ENCODE measurements at regions of chr1 and their contacts with region 1.

Region 1: DNA sequence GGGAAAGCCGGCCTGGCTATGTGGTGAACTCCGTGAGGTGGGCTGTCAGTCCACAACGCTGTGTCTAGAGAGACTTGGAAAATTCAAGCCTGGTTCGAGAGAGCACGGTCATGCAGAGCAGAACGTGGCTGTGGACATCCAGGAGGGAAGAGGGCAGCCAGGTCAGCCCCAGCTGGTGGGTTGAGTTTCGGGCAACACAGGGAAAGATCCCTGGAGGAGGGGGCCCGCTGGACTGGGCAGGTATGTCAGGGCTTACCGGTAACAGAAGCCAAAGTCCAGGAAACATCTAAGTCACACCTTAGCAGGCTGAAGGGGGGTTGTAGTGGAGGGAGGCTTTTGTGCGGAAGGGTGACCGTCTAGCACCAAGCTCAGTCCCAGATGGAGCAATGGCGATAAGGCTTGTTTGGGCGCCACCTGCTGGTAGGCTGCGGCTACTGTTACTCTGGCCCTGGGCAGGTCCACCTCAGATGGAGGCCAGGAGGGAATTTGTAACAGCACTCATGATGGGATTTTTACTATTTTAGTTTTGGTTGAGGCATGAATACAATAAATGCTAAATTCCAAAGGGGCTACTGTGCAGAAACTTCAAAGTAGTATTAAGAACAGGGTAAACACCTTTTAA is 143.3 kb upstream of the ZNF644 start:
- DNase-seq: peak; percentile 36
- H3K4me3 ChIP-seq: no peak overlapping the region
- H3K27ac ChIP-seq: no peak overlapping the region
- H3K4me1 ChIP-seq: no peaks in the 10 kb centered on the region
- H3K27me3 ChIP-seq: no peaks in the 10 kb centered on the region
- CTCF ChIP-seq: peak; percentile 98 to 99

Region 2: DNA sequence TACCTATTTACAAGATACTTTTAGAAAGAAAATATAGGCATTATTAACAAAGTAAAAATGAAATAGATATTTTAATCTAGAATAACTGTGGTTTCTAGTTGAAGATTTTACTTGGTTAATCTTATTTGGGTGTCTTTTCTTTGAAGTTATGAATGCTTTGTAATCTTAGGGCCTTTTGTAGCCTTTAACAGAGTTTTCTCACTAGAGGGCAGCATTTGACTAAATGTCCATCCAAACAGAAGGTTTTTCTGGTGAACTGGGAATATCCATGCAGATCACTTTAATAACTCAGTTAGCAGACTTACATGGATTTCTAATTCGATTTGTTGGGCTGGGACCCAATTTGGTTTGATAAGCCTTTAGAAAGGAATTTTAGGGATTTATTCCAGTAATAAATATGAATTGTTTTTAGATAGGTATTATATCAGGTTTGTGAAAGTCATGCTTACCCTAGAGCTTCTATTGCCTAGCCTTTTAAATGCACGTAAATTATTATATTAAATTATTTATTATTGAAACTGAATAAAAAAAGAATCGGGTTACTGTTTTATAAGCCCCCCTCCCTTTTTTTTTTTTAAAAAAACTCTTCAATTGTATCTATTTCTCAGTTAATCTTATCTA is 1050.5 kb before region 1 on chr1:
- CTCF ChIA-PET with region 1: no interaction called
- dilution Hi-C with region 1: no loop called
- in situ Hi-C with region 1: loop called (anchors 25 kb)
- intact Hi-C with region 1: loop called (anchors 1 kb)
- DNase-seq: peak; percentile 41
- H3K4me3 ChIP-seq: no peak overlapping the region
- H3K27ac ChIP-seq: no peak overlapping the region
- H3K4me1 ChIP-seq: no peaks in the 10 kb centered on the region
- H3K27me3 ChIP-seq: no peaks in the 10 kb centered on the region
- CTCF ChIP-seq: peak; percentile 59 to 74

Region 3: DNA sequence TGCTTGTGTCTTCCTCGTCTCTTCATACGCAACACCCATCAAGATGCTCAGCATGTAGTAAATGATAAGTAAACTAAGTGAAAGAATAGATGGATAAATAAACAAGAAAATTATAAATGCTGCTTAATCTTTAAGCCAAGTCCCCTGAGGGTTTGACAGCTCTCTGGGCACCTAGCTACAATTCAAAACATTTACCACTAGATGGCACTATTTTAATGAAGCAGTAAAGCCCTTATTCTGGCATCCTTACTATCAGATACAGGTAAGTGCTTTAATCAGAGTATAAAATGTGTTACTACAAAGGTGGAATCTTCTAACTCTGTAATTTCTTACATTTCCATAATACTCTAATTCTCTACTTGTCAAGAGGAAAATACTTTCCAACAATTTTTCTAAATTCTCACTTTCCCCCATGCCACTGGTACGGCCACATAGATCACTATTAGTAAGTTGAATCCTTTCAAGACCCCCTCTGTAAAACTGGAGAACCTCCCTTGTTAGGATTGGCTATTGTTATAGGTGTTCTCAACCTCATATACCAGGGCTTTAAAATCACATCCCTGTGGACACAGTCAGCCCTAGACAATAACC is 585.8 kb before region 1 on chr1:
- CTCF ChIA-PET with region 1: no interaction called
- dilution Hi-C with region 1: no loop called
- in situ Hi-C with region 1: no loop called
- intact Hi-C with region 1: loop called (anchors 1 kb)
- DNase-seq: peak; percentile 21
- H3K4me3 ChIP-seq: no peak overlapping the region
- H3K27ac ChIP-seq: no peak overlapping the region
- H3K4me1 ChIP-seq: peaks cover 11% of the 10 kb centered on the region
- H3K27me3 ChIP-seq: peaks cover 2% of the 10 kb centered on the region
- CTCF ChIP-seq: peak; percentile 61

Region 4: GRCh38 chr1:90721210-90722194 is 443.6 kb before region 1 on chr1:
- CTCF ChIA-PET with region 1: interaction called, 14 read pairs
- dilution Hi-C with region 1: no loop called
- in situ Hi-C with region 1: no loop called
- intact Hi-C with region 1: loop called (anchors 1 kb)
- DNase-seq: peak; percentile 41
- H3K4me3 ChIP-seq: no peak overlapping the region
- H3K27ac ChIP-seq: no peak overlapping the region
- H3K4me1 ChIP-seq: peaks cover 7% of the 10 kb centered on the region
- H3K27me3 ChIP-seq: peaks cover 74% of the 10 kb centered on the region
- CTCF ChIP-seq: peak; percentile 89 to 92

Region 5: GRCh38 chr1:91104712-91105111 is 60.4 kb before region 1 on chr1:
- CTCF ChIA-PET with region 1: no interaction called
- dilution Hi-C with region 1: no loop called
- in situ Hi-C with region 1: no loop called
- intact Hi-C with region 1: no loop called
- DNase-seq: no peak
- H3K4me3 ChIP-seq: no peak overlapping the region
- H3K27ac ChIP-seq: no peak overlapping the region
- H3K4me1 ChIP-seq: no peaks in the 10 kb centered on the region
- H3K27me3 ChIP-seq: no peaks in the 10 kb centered on the region
- CTCF ChIP-seq: no peak

Region 6: GRCh38 chr1:91234181-91234580 is 69.0 kb after region 1 on chr1:
- CTCF ChIA-PET with region 1: no interaction called
- dilution Hi-C with region 1: no loop called
- in situ Hi-C with region 1: no loop called
- intact Hi-C with region 1: no loop called
- DNase-seq: no peak
- H3K4me3 ChIP-seq: no peak overlapping the region
- H3K27ac ChIP-seq: no peak overlapping the region
- H3K4me1 ChIP-seq: no peaks in the 10 kb centered on the region
- H3K27me3 ChIP-seq: no peaks in the 10 kb centered on the region
- CTCF ChIP-seq: no peak

Region 7: GRCh38 chr1:91282695-91283420 is 117.7 kb after region 1 on chr1:
- CTCF ChIA-PET with region 1: interaction called, 5 read pairs
- dilution Hi-C with region 1: no loop called
- in situ Hi-C with region 1: loop called in 1 of 2 experiments (anchors 10 kb)
- intact Hi-C with region 1: loop called (anchors 1 kb)
- DNase-seq: peak; percentile 34
- H3K4me3 ChIP-seq: no peak overlapping the region
- H3K27ac ChIP-seq: no peak overlapping the region
- H3K4me1 ChIP-seq: no peaks in the 10 kb centered on the region
- H3K27me3 ChIP-seq: no peaks in the 10 kb centered on the region
- CTCF ChIP-seq: peak; percentile 78

Region 8: DNA sequence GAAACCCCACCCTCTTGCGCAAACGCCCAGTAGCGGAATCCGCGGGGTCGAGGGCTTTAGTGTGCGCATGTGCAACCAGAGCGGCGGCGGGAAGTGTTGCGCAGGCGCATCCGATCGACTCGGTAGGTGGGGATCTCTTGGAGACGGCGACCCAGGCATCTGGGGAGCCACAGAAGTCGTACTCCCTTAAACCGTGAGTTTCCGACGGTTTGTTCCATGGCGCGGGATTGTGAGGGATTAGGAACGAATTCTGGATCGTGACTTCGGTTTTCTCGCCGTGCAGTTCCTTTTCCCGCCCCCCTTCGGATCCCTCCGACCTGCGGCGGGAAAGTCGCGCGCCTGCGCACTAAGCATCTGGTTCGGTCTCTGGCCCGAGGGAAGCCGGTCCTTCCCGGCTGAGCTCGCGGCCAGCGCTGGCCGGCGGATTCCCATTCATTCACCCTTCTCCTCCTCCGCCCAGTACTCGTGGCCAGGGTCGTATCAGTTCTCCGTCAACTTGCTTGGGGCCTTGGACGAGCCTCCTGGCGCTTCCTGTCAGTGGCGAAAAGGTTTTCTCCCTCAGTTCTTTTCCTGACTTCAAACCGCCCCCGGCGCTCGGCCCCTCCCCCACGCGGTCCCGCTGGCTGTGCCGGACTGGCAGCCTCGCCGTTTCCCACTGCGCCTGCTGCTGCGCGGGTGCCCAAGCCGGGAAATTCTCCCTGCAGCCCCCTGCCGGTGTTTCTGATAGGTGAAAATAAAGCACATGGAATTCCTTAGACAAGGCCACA is 335.8 kb after region 1 on chr1 and contains the start of gene CDC7:
- CTCF ChIA-PET with region 1: interaction called, 3 read pairs
- dilution Hi-C with region 1: no loop called
- in situ Hi-C with region 1: no loop called
- intact Hi-C with region 1: loop called (anchors 10 kb)
- DNase-seq: peak; percentile 82
- H3K4me3 ChIP-seq: peak within 1 kb of the TSS; percentile 59 to 76 (median 67)
- H3K27ac ChIP-seq: peak within 1 kb of the TSS; percentile 85
- H3K4me1 ChIP-seq: peaks cover 3% of the 10 kb centered on the region
- H3K27me3 ChIP-seq: no peaks in the 10 kb centered on the region
- CTCF ChIP-seq: peak in 1 of 2 donors; percentile 47
- total RNA-seq, gene CDC7: 2.8 to 7.6 TPM